GM10248 (cell line): ENCODE measurements at regions of chr19 and their contacts with region 1.

Region 1: DNA sequence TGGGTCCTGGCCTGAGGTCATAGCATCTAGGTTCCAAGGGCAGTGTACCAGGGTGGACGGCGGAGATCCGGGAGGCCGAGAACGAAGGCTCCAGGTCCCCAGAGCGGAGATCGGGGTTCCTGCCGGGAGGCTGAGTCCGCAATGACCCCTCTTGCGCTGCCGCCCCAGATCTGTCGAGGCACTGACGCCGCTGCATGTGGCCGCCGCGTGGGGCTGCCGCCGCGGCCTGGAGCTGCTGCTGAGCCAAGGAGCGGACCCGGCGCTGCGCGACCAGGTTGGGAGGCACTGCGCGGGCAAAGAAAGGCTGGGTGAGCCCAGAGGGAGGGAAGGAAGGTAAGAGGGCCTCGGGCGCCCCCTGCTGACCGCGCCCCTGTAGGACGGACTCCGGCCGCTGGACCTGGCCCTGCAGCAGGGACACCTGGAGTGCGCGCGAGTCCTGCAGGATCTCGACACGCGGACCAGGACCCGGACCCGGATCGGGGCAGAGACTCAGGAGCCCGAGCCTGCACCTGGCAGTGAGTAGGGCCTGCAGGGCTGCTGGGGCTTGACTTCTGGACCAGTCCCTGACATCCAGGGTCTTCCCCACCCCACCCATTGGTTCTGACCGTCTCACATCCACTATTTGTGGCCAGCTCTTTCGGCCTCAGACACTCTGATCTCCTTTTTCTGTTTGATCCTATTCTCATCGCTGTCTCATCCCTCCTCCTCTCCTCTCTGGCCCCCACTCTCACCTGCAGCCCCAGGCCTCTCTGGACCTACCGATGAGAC is 971 bp downstream of the ANKLE1 start:
- DNase-seq: peak; percentile 91
- CTCF ChIP-seq: peak; percentile 94

Region 2: DNA sequence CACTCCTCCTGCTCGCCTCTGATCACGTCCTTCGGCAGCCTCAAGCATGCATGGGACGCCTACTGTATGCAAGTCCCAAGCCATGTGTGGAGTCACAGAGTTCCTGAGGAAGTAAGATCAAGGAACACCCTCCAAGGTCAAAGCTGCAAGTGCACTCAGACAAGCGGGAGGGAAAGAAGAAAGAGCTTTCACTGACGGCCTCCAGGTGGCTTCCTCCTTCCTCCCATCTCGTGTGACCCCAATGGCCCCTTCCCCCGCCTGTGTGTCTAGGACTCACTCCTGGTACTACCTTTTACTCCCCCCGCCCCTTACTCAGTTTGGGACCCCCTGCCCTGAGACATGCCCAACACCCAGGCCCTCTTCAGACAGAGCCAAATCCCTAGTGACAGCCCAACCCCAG is 213.5 kb before region 1 on chr19:
- CTCF ChIA-PET with region 1: interaction called, 18 read pairs
- POLR2A ChIA-PET with region 1: no interaction called
- DNase-seq: no peak
- CTCF ChIP-seq: no peak

Region 3: GRCh38 chr19:17255150-17255621 is 27.5 kb before region 1 on chr19:
- CTCF ChIA-PET with region 1: interaction called, 54 read pairs
- POLR2A ChIA-PET with region 1: no interaction called
- DNase-seq: no peak
- CTCF ChIP-seq: no peak

Region 4: GRCh38 chr19:17266975-17267788 is 15.5 kb before region 1 on chr19 and contains the start of gene BABAM1:
- CTCF ChIA-PET with region 1: interaction called, 54 read pairs
- POLR2A ChIA-PET with region 1: interaction called, 5 read pairs
- DNase-seq: peak; percentile 98
- CTCF ChIP-seq: no peak

Region 5: GRCh38 chr19:17358395-17358794 is 75.7 kb after region 1 on chr19:
- CTCF ChIA-PET with region 1: no interaction called
- POLR2A ChIA-PET with region 1: no interaction called
- DNase-seq: no peak
- CTCF ChIP-seq: no peak